WTC11 (cell line): ENCODE measurements at regions of chr11 and their contacts with region 1.

Region 1: DNA sequence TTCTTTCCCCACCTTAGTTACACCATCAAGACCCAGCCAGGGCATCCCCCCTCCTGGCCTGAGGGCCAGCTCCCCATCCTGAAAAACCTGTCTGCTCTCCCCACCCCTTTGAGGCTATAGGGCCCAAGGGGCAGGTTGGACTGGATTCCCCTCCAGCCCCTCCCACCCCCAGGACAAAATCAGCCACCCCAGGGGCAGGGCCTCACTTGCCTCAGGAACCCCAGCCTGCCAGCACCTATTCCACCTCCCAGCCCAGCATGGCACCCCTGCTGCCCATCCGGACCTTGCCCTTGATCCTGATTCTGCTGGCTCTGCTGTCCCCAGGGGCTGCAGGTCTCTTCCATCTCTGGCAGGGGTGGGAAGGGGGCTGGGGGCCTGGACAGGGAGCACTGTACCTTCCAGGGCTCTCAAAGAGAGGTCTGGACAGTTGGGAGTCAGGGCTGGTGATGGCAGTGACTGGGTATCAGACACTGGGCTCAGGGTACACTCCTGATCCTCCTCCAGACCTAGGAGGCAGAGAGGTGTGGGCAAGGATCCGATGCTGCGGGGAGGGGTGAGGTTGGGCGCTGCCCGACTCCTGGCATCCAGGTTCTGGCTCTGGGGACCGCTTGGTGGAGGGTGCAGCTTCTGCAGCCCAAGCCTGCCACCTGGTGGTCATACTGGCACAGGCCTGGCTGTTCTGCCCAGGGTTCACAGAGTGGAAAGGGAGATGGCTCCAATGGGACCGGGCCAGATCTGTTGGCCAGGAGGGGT is at the start of gene UPK2:
- DNase-seq: peak; percentile 96
- ATAC-seq: peak; percentile 96
- H3K4me3 Mint-ChIP-seq: no peak within 1 kb of the TSS
- H3K27ac Mint-ChIP-seq: no peak within 1 kb of the TSS
- H3K4me1 Mint-ChIP-seq: peaks cover 14% of the 10 kb centered on the region
- H3K27me3 Mint-ChIP-seq: peaks cover 17% of the 10 kb centered on the region
- CTCF ChIP-seq: peak; percentile 96
- total RNA-seq, gene UPK2: not detected in 3 replicates

Region 2: GRCh38 chr11:118907051-118908042 is 48.9 kb before region 1 on chr11:
- CTCF ChIA-PET with region 1: interaction called, 15 read pairs
- POLR2A ChIA-PET with region 1: no interaction called
- DNase-seq: peak; percentile 95
- ATAC-seq: peak; percentile 31
- H3K4me3 Mint-ChIP-seq: peak overlapping the region; percentile 72
- H3K27ac Mint-ChIP-seq: peak overlapping the region; percentile 74
- H3K4me1 Mint-ChIP-seq: peaks cover 37% of the 10 kb centered on the region
- H3K27me3 Mint-ChIP-seq: no peaks in the 10 kb centered on the region
- CTCF ChIP-seq: peak; percentile 92

Region 3: DNA sequence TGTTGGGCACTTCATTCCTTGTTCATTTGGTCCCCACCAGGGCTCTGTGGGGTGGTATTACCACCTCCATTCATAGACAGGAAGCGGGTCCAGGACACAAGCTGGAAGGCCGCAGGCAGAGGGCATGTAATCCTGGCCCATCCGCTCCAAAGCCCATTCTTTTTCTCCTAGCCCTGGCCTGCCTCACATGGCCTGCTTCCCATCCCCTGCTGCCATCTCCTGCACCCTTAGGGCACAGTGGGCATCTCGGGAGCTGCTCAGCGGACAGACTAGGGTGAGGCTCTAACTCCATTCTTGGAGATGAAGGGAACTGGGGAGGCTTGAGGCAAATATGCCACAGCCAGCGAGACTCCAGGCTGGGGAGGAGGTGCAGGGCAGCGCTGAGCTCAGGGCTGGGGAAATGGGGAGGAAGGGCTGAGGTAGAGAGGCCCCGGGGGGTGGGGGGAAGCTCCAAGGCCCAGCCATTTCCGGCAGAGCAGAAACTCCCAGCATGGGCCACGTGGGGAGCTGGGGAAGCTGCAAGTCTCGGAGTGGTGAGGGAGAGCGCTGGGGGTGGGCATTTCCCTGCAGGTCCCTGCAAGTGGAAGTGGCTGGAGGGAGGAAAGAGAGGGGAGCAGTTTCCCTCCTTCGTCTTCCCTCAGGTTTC is 16.2 kb before region 1 on chr11:
- CTCF ChIA-PET with region 1: interaction called, 12 read pairs
- POLR2A ChIA-PET with region 1: no interaction called
- DNase-seq: peak; percentile 50
- ATAC-seq: peak; percentile 88
- H3K4me3 Mint-ChIP-seq: no peak overlapping the region
- H3K27ac Mint-ChIP-seq: no peak overlapping the region
- H3K4me1 Mint-ChIP-seq: peaks cover 29% of the 10 kb centered on the region
- H3K27me3 Mint-ChIP-seq: peaks cover 18% of the 10 kb centered on the region
- CTCF ChIP-seq: no peak

Region 4: GRCh38 chr11:118997627-118998387 is 41.5 kb after region 1 on chr11 and contains the start of gene CENATAC:
- CTCF ChIA-PET with region 1: interaction called, 12 read pairs
- POLR2A ChIA-PET with region 1: no interaction called
- DNase-seq: peak; percentile 97
- ATAC-seq: peak; percentile 95
- H3K4me3 Mint-ChIP-seq: peak within 1 kb of the TSS; percentile 99
- H3K27ac Mint-ChIP-seq: peak within 1 kb of the TSS; percentile 98
- H3K4me1 Mint-ChIP-seq: peaks cover 26% of the 10 kb centered on the region
- H3K27me3 Mint-ChIP-seq: no peaks in the 10 kb centered on the region
- CTCF ChIP-seq: no peak
- total RNA-seq, gene CENATAC: 39.1 to 42.1 TPM (median 41.7 TPM) in 3 replicates